Naive thymus-derived CD4-positive, alpha-beta T cell (primary cell): ENCODE measurements at regions of chr15 and their contacts with region 1.

Region 1: DNA sequence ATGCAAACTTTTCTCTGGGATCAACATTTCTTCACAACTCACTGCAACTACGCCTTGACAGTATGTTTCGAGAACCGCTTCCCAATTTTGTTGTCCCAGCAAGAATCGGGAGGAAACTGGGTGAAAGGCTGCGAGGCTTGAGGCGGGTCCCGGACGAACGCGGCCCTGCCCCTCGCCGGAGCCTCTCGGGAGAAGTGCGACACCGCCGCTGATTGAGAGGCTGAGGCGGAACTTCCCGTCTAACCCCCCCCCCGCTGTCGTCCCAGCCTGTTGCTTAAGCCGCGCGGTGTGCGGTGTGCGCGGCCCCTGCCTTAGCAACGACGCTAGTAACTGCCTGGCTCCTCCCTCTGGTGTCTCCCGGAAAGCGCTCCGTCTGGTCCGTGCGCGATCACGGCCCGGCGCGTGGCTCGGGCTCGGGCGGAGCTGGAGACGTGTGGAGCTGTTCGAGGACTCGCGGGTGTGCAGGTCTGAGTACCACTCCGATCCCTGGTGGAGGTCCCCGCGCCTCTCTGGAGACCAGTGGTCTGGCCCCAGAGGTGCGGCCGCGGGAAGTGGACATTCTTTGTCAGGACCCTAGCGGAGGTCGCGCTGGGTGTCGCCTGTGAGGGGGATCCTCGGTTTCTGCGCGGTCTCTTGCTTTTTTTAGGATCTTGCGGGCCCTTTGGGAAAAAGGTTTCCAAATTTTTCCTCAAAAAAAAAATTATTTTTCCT is at the starts of genes DTWD1 and FAM227B:
- DNase-seq: peak; percentile 85 to 94 (median 93)
- ATAC-seq: peak; percentile 99
- H3K4me3 ChIP-seq: peak within 1 kb of the TSS; percentile 78
- H3K4me3 Mint-ChIP-seq: peak within 1 kb of the TSS; percentile 85 to 99 (median 96)
- H3K27ac ChIP-seq: peak within 1 kb of the TSS; percentile 88
- H3K27ac Mint-ChIP-seq: peak within 1 kb of the TSS; percentile 93 to 99 (median 98)
- H3K4me1 ChIP-seq: peaks cover 17% of the 10 kb centered on the region in 2 donors
- H3K4me1 Mint-ChIP-seq: peaks cover 19 to 63% (median 48%) of the 10 kb centered on the region in 7 donors
- H3K27me3 ChIP-seq: no peaks in the 10 kb centered on the region
- H3K27me3 Mint-ChIP-seq: no peaks in the 10 kb centered on the region
- total RNA-seq, gene DTWD1: 14.3 to 31.0 (median 20.1) TPM
- total RNA-seq, gene FAM227B: 3.7 to 16.5 (median 8.2) TPM

Region 2: GRCh38 chr15:48810414-48811317 is 810.1 kb before region 1 on chr15 and contains the start of gene CEP152:
- CTCF ChIA-PET with region 1: no interaction called
- POLR2A ChIA-PET with region 1: interaction called, 3 read pairs
- intact Hi-C with region 1: loop called (anchors 1 to 2 kb)
- DNase-seq: peak; percentile 91 to 99 (median 98)
- ATAC-seq: peak; percentile 98
- H3K4me3 ChIP-seq: peak within 1 kb of the TSS; percentile 78
- H3K4me3 Mint-ChIP-seq: peak within 1 kb of the TSS; percentile 82 to 96 (median 89)
- H3K27ac ChIP-seq: peak within 1 kb of the TSS; percentile 76
- H3K27ac Mint-ChIP-seq: peak within 1 kb of the TSS; percentile 14 to 96 (median 87)
- H3K4me1 ChIP-seq: peaks cover 9 to 13% of the 10 kb centered on the region in 2 donors
- H3K4me1 Mint-ChIP-seq: peaks cover 12 to 38% (median 33%) of the 10 kb centered on the region in 7 donors
- H3K27me3 ChIP-seq: no peaks in the 10 kb centered on the region
- H3K27me3 Mint-ChIP-seq: peaks cover 0 to 24% (median 0%) of the 10 kb centered on the region in 5 donors
- total RNA-seq, gene CEP152: 6.2 to 26.3 (median 17.0) TPM

Region 3: GRCh38 chr15:48992545-48992944 is 628.3 kb before region 1 on chr15:
- CTCF ChIA-PET with region 1: no interaction called
- POLR2A ChIA-PET with region 1: no interaction called
- intact Hi-C with region 1: no loop called
- DNase-seq: no peak
- ATAC-seq: peak; percentile 52
- H3K4me3 ChIP-seq: no peak overlapping the region
- H3K4me3 Mint-ChIP-seq: no peak overlapping the region
- H3K27ac ChIP-seq: no peak overlapping the region
- H3K27ac Mint-ChIP-seq: peak overlapping the region in 2 of 9 donors; percentile 32 to 57
- H3K4me1 ChIP-seq: no peaks in the 10 kb centered on the region
- H3K4me1 Mint-ChIP-seq: no peaks in the 10 kb centered on the region
- H3K27me3 ChIP-seq: no peaks in the 10 kb centered on the region
- H3K27me3 Mint-ChIP-seq: no peaks in the 10 kb centered on the region

Region 4: GRCh38 chr15:49046220-49047102 is 574.4 kb before region 1 on chr15 and contains the start of gene SECISBP2L:
- CTCF ChIA-PET with region 1: no interaction called
- POLR2A ChIA-PET with region 1: no interaction called
- intact Hi-C with region 1: loop called (anchors 1 kb)
- DNase-seq: peak; percentile 73 to 92 (median 91)
- ATAC-seq: peak; percentile 98
- H3K4me3 ChIP-seq: peak within 1 kb of the TSS; percentile 86
- H3K4me3 Mint-ChIP-seq: peak within 1 kb of the TSS; percentile 96 to 99 (median 98)
- H3K27ac ChIP-seq: peak within 1 kb of the TSS; percentile 82
- H3K27ac Mint-ChIP-seq: peak within 1 kb of the TSS; percentile 91 to 97 (median 93)
- H3K4me1 ChIP-seq: peaks cover 16 to 18% of the 10 kb centered on the region in 2 donors
- H3K4me1 Mint-ChIP-seq: peaks cover 23 to 41% (median 34%) of the 10 kb centered on the region in 7 donors
- H3K27me3 ChIP-seq: no peaks in the 10 kb centered on the region
- H3K27me3 Mint-ChIP-seq: no peaks in the 10 kb centered on the region
- total RNA-seq, gene SECISBP2L: 39.3 to 75.8 (median 55.8) TPM

Region 5: DNA sequence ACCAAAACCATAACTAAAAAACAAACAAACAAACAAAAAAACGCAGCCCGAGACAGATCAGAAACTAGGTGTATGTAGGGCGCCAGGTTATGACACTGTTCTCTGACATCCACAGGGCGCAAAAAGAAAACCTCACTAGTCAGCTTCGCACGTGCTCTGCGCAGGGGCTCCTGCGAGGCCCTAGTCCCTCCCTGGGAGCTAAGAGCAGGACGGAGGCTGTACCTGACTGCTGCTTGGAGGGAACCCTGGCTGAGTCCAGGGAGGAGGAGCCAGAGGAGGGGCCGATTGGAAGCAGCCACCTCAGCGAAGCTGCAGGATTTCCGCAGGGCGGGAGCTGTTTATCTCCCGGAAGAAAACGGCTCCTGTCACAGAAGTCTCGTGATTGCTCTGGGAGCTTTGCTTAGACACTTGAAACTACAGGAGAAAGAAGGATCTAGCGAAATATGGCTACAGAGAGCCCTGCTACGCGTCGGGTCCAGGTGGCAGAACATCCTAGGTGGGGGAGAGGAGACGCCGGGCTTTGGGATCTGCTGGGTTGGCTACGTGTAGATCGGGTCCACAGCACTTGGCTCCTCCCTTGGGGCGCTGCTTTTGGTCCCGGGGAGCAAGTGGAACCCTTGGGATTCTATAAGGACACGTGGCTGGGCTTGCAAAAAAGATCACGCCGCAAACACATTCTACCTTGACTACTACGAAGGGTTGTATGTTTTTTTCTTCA is 450.8 kb before region 1 on chr15 and contains the start of gene GALK2:
- CTCF ChIA-PET with region 1: no interaction called
- POLR2A ChIA-PET with region 1: no interaction called
- intact Hi-C with region 1: loop called (anchors 1 to 5 kb)
- DNase-seq: peak; percentile 42 to 90 (median 75)
- ATAC-seq: peak; percentile 96
- H3K4me3 ChIP-seq: peak within 1 kb of the TSS; percentile 88
- H3K4me3 Mint-ChIP-seq: peak within 1 kb of the TSS; percentile 91 to 100 (median 98)
- H3K27ac ChIP-seq: peak within 1 kb of the TSS; percentile 88
- H3K27ac Mint-ChIP-seq: peak within 1 kb of the TSS; percentile 94 to 99 (median 98)
- H3K4me1 ChIP-seq: peaks cover 4 to 14% of the 10 kb centered on the region in 2 donors
- H3K4me1 Mint-ChIP-seq: peaks cover 24 to 56% (median 46%) of the 10 kb centered on the region in 7 donors
- H3K27me3 ChIP-seq: no peaks in the 10 kb centered on the region
- H3K27me3 Mint-ChIP-seq: no peaks in the 10 kb centered on the region
- total RNA-seq, gene GALK2: 19.4 to 36.6 (median 28.7) TPM

Region 6: DNA sequence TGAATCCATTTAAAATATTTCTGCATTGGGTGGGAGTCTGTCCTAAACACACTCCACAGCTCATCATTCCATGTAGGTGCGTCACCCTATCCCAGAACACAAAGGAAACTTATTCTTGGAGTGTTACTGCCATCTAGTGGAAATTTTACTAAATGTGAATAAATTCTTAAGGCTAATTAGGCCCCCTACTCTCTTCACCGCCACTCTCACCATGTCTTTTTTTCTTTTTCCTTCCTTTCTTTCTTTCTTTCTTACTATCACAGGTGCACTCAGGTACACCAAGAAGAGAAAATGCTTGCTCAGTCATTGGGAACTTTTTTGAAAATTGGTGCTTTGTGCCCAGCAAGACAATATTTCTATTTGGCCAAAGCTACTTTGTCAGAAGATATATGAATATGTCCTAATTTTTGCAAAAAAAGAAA is 524.6 kb after region 1 on chr15:
- CTCF ChIA-PET with region 1: no interaction called
- POLR2A ChIA-PET with region 1: no interaction called
- intact Hi-C with region 1: loop called in 1 of 2 experiments (anchors 2 kb)
- DNase-seq: peak in 6 of 9 donors; percentile 7 to 47 (median 36)
- ATAC-seq: peak; percentile 60
- H3K4me3 ChIP-seq: no peak overlapping the region
- H3K4me3 Mint-ChIP-seq: no peak overlapping the region
- H3K27ac ChIP-seq: no peak overlapping the region
- H3K27ac Mint-ChIP-seq: peak overlapping the region in 1 of 9 donors; percentile 66
- H3K4me1 ChIP-seq: no peaks in the 10 kb centered on the region
- H3K4me1 Mint-ChIP-seq: peaks cover 0 to 30% (median 0%) of the 10 kb centered on the region in 7 donors
- H3K27me3 ChIP-seq: no peaks in the 10 kb centered on the region
- H3K27me3 Mint-ChIP-seq: peaks cover 0 to 3% (median 0%) of the 10 kb centered on the region in 5 donors

Region 7: DNA sequence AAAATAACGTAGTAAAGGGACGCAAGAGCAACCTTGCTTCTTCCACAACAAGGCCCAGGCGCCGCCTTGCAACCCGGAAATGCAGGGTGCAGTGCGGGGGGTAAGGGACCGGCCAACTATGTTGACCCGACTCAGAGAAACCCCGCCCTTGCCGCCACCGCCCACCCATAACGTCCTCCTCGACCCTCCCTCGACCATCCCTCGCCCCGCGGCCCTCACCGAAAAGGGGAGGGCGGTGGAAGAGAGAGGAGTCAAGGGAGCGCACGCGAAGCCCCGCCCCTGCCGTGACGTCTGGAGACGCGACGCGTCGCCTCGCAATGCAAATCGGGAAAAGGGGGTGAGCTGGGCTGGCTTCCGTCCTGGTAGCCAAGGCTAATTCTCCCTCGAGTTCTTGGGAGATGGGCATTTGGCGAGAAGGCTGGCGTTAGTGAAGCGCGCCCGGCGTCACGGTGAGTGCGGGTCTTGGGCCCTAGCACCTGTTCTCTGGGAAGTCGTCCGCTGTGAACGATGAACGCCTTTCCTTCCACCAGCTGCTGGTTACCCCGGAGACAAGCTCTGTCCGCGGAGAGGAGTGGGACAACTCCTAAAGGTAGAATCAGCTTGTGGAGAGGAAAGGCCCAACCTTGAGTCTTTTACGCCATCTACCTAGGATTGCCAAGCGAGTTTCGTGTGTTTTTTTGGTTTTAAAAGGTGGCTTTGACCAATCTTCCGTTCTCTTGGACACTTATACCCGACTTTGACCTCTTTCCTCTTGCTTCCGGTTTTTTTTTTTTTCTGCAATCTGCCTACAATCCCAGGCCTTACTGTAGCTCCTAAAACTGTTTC is 803.5 kb after region 1 on chr15 and contains the start of gene USP8:
- CTCF ChIA-PET with region 1: no interaction called
- POLR2A ChIA-PET with region 1: no interaction called
- intact Hi-C with region 1: loop called (anchors 1 to 5 kb)
- DNase-seq: peak; percentile 88 to 95 (median 93)
- ATAC-seq: peak; percentile 98
- H3K4me3 ChIP-seq: peak within 1 kb of the TSS; percentile 91
- H3K4me3 Mint-ChIP-seq: peak within 1 kb of the TSS; percentile 86 to 100 (median 98)
- H3K27ac ChIP-seq: peak within 1 kb of the TSS; percentile 93
- H3K27ac Mint-ChIP-seq: peak within 1 kb of the TSS; percentile 91 to 99 (median 97)
- H3K4me1 ChIP-seq: peaks cover 8 to 20% of the 10 kb centered on the region in 2 donors
- H3K4me1 Mint-ChIP-seq: peaks cover 23 to 59% (median 34%) of the 10 kb centered on the region in 7 donors
- H3K27me3 ChIP-seq: no peaks in the 10 kb centered on the region
- H3K27me3 Mint-ChIP-seq: no peaks in the 10 kb centered on the region
- total RNA-seq, gene USP8: 52.8 to 61.8 (median 57.1) TPM

Region 8: DNA sequence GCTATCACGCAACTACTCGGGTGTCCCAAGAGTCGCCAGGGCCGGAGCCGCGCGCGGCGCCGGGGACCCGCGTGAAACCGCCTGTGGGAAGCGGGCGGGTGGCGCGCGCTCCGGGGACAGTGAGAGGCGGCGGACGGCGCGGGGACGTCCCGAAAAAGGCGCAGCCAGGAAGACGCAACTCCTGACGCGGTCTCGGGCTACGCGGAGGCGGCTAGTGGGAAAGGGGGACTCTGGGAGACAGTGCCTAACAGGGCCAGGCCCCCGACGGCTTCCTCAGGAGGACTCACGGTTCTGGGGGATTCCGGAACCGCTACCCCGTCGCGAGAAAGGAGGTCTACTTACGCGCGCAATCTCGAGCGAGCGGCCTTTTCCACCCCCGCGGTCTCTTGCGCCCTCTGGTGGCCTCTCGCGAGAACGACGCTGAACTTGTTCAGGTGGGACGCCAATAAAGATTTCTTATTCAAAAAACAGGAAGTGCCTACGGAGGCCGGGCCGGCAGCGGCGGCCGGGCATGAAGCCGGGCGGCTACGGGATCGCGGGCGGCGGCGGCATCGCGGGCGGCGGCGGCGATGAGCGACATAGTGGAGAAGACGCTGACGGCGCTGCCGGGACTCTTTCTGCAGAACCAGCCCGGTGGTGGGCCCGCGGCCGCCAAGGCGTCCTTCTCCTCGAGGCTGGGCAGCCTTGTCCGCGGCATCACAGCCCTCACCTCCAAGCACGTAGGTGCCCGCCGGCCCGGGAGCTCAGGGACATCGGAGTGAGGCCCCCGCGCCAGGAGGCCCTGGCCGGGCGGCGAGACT is 1287.6 kb after region 1 on chr15 and contains the start of gene AP4E1:
- CTCF ChIA-PET with region 1: no interaction called
- POLR2A ChIA-PET with region 1: no interaction called
- intact Hi-C with region 1: loop called (anchors 1 to 2 kb)
- DNase-seq: peak; percentile 91 to 96 (median 95)
- ATAC-seq: peak; percentile 81
- H3K4me3 ChIP-seq: peak within 1 kb of the TSS; percentile 74
- H3K4me3 Mint-ChIP-seq: peak within 1 kb of the TSS; percentile 89 to 99 (median 96)
- H3K27ac ChIP-seq: peak within 1 kb of the TSS; percentile 99
- H3K27ac Mint-ChIP-seq: peak within 1 kb of the TSS; percentile 93 to 99 (median 98)
- H3K4me1 ChIP-seq: peaks cover 4% of the 10 kb centered on the region in 2 donors
- H3K4me1 Mint-ChIP-seq: peaks cover 11 to 35% (median 30%) of the 10 kb centered on the region in 7 donors
- H3K27me3 ChIP-seq: no peaks in the 10 kb centered on the region
- H3K27me3 Mint-ChIP-seq: no peaks in the 10 kb centered on the region
- total RNA-seq, gene AP4E1: 9.9 to 13.8 (median 12.5) TPM